ENCODE measurements at regions of chr16 and their contacts with region 1.

Region 1: DNA sequence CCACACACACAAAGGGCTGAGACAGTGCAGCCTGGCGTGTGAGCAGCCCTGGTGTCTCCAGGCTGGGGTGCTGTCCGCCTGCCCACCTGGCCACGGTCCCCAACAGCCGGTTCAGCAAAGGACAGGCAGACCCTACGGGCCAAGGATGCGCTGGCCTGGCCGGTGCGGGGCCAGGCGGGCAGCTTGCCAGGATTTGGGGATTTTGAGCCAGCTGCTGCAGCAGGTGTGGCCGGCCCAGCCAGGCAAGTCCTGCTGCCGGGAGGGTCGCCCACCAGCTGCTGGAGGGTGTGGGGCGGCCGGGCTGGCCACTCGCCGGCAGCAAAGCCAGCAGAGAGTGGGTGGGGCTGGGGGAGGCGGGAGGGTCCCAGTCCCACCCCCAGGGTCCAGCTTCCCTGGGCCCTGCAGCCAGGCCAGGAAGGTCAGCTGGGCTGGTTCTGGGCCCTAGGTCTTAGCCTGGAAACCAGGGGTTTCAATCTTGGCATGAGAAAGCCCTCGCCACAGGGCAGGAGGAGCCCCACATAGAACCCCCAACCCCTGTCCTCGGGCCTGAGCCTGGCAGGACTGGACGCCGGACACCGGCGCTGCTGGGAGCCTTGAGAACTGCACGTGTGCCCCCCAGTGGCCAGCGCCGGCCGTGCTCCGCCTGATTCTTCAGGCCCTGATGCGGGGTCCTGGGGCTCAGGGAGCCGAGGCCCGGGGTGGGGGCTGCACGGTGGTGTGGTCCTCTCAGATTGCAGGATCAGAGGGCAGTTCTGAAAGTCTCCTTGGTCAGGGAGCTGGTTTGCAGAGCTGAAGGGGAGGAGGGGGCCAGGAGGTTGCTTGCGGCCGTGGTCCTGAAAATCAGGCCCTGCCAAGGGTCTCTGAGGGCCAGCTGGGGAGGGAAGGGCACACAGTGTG is 17.6 kb upstream of the SSTR5 start:
- DNase-seq: peak; percentile 16
- H3K4me3 ChIP-seq: no peak overlapping the region
- H3K27ac ChIP-seq: no peak overlapping the region
- H3K4me1 ChIP-seq: no peaks in the 10 kb centered on the region
- H3K27me3 ChIP-seq: no peaks in the 10 kb centered on the region
- CTCF ChIP-seq: peak; percentile 57 to 81

Region 2: DNA sequence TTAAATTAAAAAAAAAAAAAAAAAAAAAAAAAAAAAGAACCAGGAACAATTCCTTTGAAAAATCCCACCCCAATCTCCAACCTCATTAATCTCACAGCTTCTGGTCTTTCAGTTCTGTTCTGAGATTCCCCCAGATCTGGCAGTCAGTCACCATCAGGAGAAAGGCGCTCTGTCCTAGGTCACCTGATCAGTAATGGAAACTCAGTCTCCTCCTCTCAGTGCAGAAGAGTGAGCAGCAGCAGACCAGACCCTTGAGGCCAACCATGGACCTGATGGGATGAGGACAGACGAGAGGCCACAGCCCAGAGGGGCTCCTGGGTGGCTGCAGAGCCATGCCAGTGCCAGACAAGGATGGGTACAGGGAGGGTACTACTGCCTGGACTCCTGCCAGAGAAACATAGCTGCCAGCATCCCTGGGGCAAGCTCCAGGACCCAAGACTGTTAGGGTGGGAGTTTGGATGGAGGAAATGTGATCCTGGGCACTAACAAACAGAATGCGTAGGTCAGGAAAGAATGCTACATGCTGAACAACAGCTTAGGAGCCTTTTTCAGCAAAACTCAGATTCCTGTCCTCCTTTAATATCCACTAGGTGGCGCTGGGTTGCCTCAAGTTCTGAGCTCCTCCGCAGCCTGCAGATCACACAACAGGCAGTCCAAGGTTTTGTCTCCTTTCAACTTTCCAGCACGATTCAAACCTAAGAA is 948.1 kb before region 1 on chr16:
- CTCF ChIA-PET with region 1: no interaction called
- dilution Hi-C with region 1: no loop called
- in situ Hi-C with region 1: no loop called
- intact Hi-C with region 1: no loop called
- DNase-seq: peak; percentile 53
- H3K4me3 ChIP-seq: no peak overlapping the region
- H3K27ac ChIP-seq: no peak overlapping the region
- H3K4me1 ChIP-seq: peaks cover 12% of the 10 kb centered on the region
- H3K27me3 ChIP-seq: no peaks in the 10 kb centered on the region
- CTCF ChIP-seq: peak; percentile 74 to 81

Region 3: GRCh38 chr16:720990-721764 is 333.7 kb before region 1 on chr16 and contains the start of gene ANTKMT:
- CTCF ChIA-PET with region 1: no interaction called
- dilution Hi-C with region 1: no loop called
- in situ Hi-C with region 1: loop called in 1 of 2 experiments (anchors 25 kb)
- intact Hi-C with region 1: no loop called
- DNase-seq: peak; percentile 77
- H3K4me3 ChIP-seq: peak within 1 kb of the TSS; percentile 65 to 79 (median 78)
- H3K27ac ChIP-seq: peak within 1 kb of the TSS; percentile 24
- H3K4me1 ChIP-seq: peaks cover 32% of the 10 kb centered on the region
- H3K27me3 ChIP-seq: no peaks in the 10 kb centered on the region
- CTCF ChIP-seq: no peak
- total RNA-seq, gene ANTKMT: 13.5 to 35.4 TPM

Region 4: DNA sequence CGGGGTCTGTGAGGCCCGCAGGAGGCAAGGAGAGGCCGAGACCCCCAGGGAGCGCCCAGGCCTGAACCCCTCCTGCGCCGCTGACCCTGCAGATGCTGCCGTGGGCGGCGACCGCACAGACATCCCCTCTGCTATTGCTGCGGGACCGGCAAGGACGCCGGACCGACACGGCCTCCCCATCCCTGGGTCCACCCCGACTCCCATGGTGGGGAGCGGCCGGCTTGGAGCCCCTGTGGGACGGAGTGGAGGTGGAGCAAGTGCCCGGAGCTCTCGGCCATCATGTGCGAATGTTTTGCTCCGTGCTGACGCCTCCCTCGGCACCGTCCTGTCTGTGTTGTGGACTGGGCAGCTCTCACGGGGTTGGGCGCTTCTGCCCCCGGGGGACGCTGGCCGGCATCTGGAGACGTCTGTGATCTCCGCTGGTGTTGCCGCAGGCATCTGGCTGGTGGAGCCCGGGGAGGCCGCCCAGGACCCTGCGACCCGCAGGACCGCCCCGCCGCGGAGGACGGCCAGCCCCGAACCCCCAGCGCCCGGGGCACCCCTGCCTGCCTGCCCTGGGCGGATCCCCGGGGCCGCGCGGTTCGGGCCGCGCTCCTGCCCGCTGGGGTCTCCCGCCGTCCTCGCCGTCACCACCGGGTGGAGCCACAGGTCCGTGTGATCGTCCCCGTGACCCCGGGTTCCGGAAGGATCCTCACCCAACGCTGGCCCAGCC is 241.5 kb before region 1 on chr16:
- CTCF ChIA-PET with region 1: no interaction called
- dilution Hi-C with region 1: no loop called
- in situ Hi-C with region 1: no loop called
- intact Hi-C with region 1: loop called (anchors 1 kb)
- DNase-seq: no peak
- H3K4me3 ChIP-seq: no peak overlapping the region
- H3K27ac ChIP-seq: no peak overlapping the region
- H3K4me1 ChIP-seq: peaks cover 4% of the 10 kb centered on the region
- H3K27me3 ChIP-seq: peaks cover 3% of the 10 kb centered on the region
- CTCF ChIP-seq: peak; percentile 13 to 49

Region 5: GRCh38 chr16:886084-886543 is 168.8 kb before region 1 on chr16:
- CTCF ChIA-PET with region 1: no interaction called
- dilution Hi-C with region 1: no loop called
- in situ Hi-C with region 1: no loop called
- intact Hi-C with region 1: no loop called
- DNase-seq: no peak
- H3K4me3 ChIP-seq: no peak overlapping the region
- H3K27ac ChIP-seq: no peak overlapping the region
- H3K4me1 ChIP-seq: no peaks in the 10 kb centered on the region
- H3K27me3 ChIP-seq: peaks cover 2% of the 10 kb centered on the region
- CTCF ChIP-seq: no peak

Region 6: DNA sequence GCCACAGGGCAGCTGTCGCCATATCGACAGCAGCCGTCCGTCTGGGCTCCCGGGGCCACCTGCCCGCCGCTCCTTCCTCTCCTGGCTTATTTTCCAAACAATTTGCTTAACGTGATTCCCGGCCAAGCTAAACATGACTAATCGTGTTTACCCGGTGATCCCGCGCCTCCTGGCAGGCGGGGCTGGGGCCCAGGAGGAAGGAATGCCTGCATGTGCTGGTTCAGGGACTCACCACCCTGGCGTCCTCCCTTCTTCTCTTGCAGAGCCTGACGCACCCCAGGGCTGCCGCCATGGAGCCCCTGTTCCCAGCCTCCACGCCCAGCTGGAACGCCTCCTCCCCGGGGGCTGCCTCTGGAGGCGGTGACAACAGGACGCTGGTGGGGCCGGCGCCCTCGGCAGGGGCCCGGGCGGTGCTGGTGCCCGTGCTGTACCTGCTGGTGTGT is 23.7 kb after region 1 on chr16:
- CTCF ChIA-PET with region 1: no interaction called
- dilution Hi-C with region 1: no loop called
- in situ Hi-C with region 1: no loop called
- intact Hi-C with region 1: no loop called
- DNase-seq: peak; percentile 77
- H3K4me3 ChIP-seq: no peak overlapping the region
- H3K27ac ChIP-seq: no peak overlapping the region
- H3K4me1 ChIP-seq: peaks cover 11% of the 10 kb centered on the region
- H3K27me3 ChIP-seq: peaks cover 8% of the 10 kb centered on the region
- CTCF ChIP-seq: no peak

Region 7: GRCh38 chr16:1105888-1106620 is 51.1 kb after region 1 on chr16:
- CTCF ChIA-PET with region 1: interaction called, 4 read pairs
- dilution Hi-C with region 1: no loop called
- in situ Hi-C with region 1: no loop called
- intact Hi-C with region 1: loop called (anchors 1 kb)
- DNase-seq: peak; percentile 26
- H3K4me3 ChIP-seq: no peak overlapping the region
- H3K27ac ChIP-seq: no peak overlapping the region
- H3K4me1 ChIP-seq: peaks cover 4% of the 10 kb centered on the region
- H3K27me3 ChIP-seq: peaks cover 34% of the 10 kb centered on the region
- CTCF ChIP-seq: peak; percentile 59 to 88

Region 8: DNA sequence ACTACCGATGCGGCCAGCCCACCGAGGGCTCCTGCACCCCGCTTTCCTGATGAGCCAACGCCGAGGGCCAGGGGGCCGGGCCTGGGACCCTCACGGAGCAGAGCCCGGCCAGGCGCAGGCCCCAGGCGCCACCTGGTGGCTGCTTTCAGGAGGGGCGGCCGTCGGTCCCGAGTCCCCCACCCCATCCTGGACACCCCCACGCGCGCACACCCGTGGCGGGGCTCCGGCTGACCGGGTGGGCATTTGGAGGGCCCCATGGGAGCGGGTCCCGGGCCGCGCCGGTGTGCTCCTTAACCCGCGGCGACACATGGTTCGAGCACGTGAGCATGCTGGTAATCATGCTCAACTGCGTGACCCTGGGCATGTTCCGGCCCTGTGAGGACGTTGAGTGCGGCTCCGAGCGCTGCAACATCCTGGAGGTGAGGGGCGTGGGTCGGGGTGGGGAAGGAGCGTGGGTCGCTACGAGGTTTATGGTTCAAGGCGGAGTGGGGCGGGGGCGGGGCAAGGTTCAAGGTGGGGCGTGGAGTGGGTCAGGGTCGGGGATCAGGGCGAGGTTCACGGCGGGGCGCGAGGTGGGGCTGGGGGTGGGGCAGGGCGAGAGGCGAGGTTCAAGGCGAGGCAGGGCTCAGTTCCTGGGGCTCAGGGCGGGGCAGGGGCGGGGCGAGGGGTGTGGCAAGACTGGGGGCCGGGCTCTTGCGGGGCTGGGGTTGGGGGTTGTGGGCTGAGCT is 139.9 kb after region 1 on chr16:
- CTCF ChIA-PET with region 1: no interaction called
- dilution Hi-C with region 1: no loop called
- in situ Hi-C with region 1: no loop called
- intact Hi-C with region 1: loop called (anchors 5 kb)
- DNase-seq: no peak
- H3K4me3 ChIP-seq: no peak overlapping the region
- H3K27ac ChIP-seq: no peak overlapping the region
- H3K4me1 ChIP-seq: no peaks in the 10 kb centered on the region
- H3K27me3 ChIP-seq: no peaks in the 10 kb centered on the region
- CTCF ChIP-seq: peak; percentile 25 to 73

Measured in mammary epithelial cell (primary cell).